ENCODE measurements at regions of chr5 and their contacts with region 1.

Region 1: DNA sequence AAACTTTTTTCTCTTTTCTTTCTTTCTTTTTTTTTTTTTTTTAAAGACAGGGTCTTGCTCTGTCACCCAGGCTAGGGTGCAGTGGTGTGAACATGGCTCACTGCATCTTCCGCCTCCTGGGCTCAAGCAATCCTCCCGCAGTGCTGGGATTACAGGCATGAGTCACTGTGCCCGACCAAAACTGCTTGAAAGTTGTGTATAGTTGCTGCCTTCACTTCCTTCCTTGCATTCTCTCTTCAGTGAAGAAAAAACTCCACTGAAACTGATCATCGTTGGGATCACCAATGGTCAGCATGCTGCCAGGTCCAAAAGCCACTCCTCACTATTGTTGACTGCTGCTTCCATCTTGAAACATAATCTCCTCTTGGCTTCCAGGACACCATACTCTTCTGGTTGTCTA is 66.6 kb upstream of the CTNNA1 start:
- DNase-seq: no peak
- H3K4me3 ChIP-seq: no peak overlapping the region
- H3K27ac ChIP-seq: no peak overlapping the region
- H3K4me1 ChIP-seq: no peaks in the 10 kb centered on the region
- H3K27me3 ChIP-seq: no peaks in the 10 kb centered on the region
- CTCF ChIP-seq: no peak

Region 2: GRCh38 chr5:137945825-137946224 is 740.8 kb before region 1 on chr5:
- CTCF ChIA-PET with region 1: no interaction called
- POLR2A ChIA-PET with region 1: no interaction called
- intact Hi-C with region 1: no loop called
- DNase-seq: no peak
- H3K4me3 ChIP-seq: no peak overlapping the region
- H3K27ac ChIP-seq: no peak overlapping the region
- H3K4me1 ChIP-seq: no peaks in the 10 kb centered on the region
- H3K27me3 ChIP-seq: no peaks in the 10 kb centered on the region
- CTCF ChIP-seq: no peak

Region 3: GRCh38 chr5:138542956-138543729 is 143.5 kb before region 1 on chr5 and contains the start of gene ETF1:
- CTCF ChIA-PET with region 1: no interaction called
- POLR2A ChIA-PET with region 1: no interaction called
- intact Hi-C with region 1: no loop called
- DNase-seq: peak; percentile 100
- H3K4me3 ChIP-seq: peak within 1 kb of the TSS; percentile 87
- H3K27ac ChIP-seq: peak within 1 kb of the TSS; percentile 99
- H3K4me1 ChIP-seq: peaks cover 28% of the 10 kb centered on the region
- H3K27me3 ChIP-seq: no peaks in the 10 kb centered on the region
- CTCF ChIP-seq: no peak
- total RNA-seq, gene ETF1: 172 and 191 TPM in 2 replicates

Region 4: GRCh38 chr5:138668376-138669079 is 18.1 kb before region 1 on chr5:
- CTCF ChIA-PET with region 1: no interaction called
- POLR2A ChIA-PET with region 1: interaction called, 10 read pairs
- intact Hi-C with region 1: no loop called
- DNase-seq: no peak
- H3K4me3 ChIP-seq: no peak overlapping the region
- H3K27ac ChIP-seq: no peak overlapping the region
- H3K4me1 ChIP-seq: no peaks in the 10 kb centered on the region
- H3K27me3 ChIP-seq: no peaks in the 10 kb centered on the region
- CTCF ChIP-seq: no peak